ENCODE measurements at regions of chr1 and their contacts with region 1.

Region 1: GRCh38 chr1:155208541-155209311 is at the start of gene MTX1:
- DNase-seq: peak; percentile 92
- H3K4me3 Mint-ChIP-seq: peak within 1 kb of the TSS; percentile 79
- H3K27ac Mint-ChIP-seq: peak within 1 kb of the TSS; percentile 89
- H3K4me1 Mint-ChIP-seq: peaks cover 29% of the 10 kb centered on the region
- H3K27me3 Mint-ChIP-seq: no peaks in the 10 kb centered on the region

Region 2: GRCh38 chr1:155172732-155173477 is 35.8 kb before region 1 on chr1 and contains the start of gene KRTCAP2:
- CTCF ChIA-PET with region 1: interaction called, 26 read pairs
- DNase-seq: peak; percentile 97
- H3K4me3 Mint-ChIP-seq: peak within 1 kb of the TSS; percentile 97
- H3K27ac Mint-ChIP-seq: peak within 1 kb of the TSS; percentile 98
- H3K4me1 Mint-ChIP-seq: peaks cover 65% of the 10 kb centered on the region
- H3K27me3 Mint-ChIP-seq: peaks cover 4% of the 10 kb centered on the region

Region 3: GRCh38 chr1:155193275-155193990 is 15.3 kb before region 1 on chr1:
- CTCF ChIA-PET with region 1: interaction called, 44 read pairs
- DNase-seq: peak; percentile 81
- H3K4me3 Mint-ChIP-seq: peak overlapping the region; percentile 83
- H3K27ac Mint-ChIP-seq: peak overlapping the region; percentile 99
- H3K4me1 Mint-ChIP-seq: peaks cover 39% of the 10 kb centered on the region
- H3K27me3 Mint-ChIP-seq: no peaks in the 10 kb centered on the region

Region 4: GRCh38 chr1:155227261-155228095 is 18.8 kb after region 1 on chr1:
- CTCF ChIA-PET with region 1: interaction called, 69 read pairs
- DNase-seq: peak; percentile 100
- H3K4me3 Mint-ChIP-seq: peak overlapping the region; percentile 88
- H3K27ac Mint-ChIP-seq: peak overlapping the region; percentile 90
- H3K4me1 Mint-ChIP-seq: peaks cover 38% of the 10 kb centered on the region
- H3K27me3 Mint-ChIP-seq: peaks cover 4% of the 10 kb centered on the region

Region 5: DNA sequence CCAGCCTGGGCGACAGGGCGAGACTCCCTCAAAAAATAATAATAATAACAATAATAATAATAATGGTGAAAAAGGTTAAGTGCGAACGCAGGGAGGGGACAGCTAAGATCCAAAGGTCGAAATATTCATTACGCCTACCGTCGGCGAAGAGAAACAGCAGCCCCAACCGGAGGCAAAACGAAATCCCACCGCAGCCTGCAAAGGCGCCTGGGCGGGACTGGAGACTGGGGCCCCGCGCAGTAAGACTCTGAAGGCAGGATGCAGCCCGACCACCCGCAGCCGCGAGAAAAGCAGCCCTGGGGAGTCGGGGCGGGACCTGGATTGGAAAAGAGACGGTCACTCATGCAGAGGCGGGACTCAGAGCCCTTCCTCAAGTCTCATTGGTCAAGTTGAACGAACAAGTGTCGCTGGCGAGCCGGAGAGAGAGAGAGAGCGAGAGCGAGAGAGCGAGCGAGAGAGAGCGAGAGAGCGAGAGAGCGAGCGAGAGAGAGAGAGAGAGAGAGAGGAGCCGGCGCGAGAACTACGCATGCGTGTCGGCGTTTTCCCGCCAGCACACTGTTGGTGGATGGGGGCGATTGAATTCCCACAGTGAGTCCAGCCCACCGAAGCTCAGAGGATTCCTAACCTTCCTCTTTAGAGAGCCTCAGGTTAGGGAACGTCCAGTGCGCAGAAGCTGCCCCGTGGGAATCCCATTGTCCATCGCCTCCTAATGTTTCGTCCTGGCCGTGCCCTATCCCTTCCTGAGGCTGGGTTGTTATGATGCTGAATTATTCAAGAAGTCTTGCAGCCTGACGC is 35.8 kb after region 1 on chr1:
- CTCF ChIA-PET with region 1: interaction called, 10 read pairs
- DNase-seq: peak; percentile 99
- H3K4me3 Mint-ChIP-seq: peak overlapping the region; percentile 79
- H3K27ac Mint-ChIP-seq: peak overlapping the region; percentile 95
- H3K4me1 Mint-ChIP-seq: peaks cover 56% of the 10 kb centered on the region
- H3K27me3 Mint-ChIP-seq: peaks cover 5% of the 10 kb centered on the region

Measured in activated naive CD4-positive, alpha-beta T cell treated with anti-CD3 and anti-CD28 coated beads, Interleukin-2, amount 10 ng/mL, durations not matched to agents 7 days and 5 days (primary cell).